ENCODE measurements at regions of chr4 and their contacts with region 1.

Region 1: GRCh38 chr4:105140684-105141490 is 5.8 kb upstream of the TET2 start:
- DNase-seq: no peak
- ATAC-seq: peak; percentile 59
- H3K4me3 ChIP-seq: no peak overlapping the region
- H3K27ac ChIP-seq: no peak overlapping the region
- H3K4me1 ChIP-seq: no peaks in the 10 kb centered on the region; the same call in none of the 2 replicates
- H3K27me3 ChIP-seq: no peaks in the 10 kb centered on the region
- CTCF ChIP-seq: peak; percentile 51 to 83 (median 60); a peak in 5 of 6 replicates
- EP300 ChIP-seq: no peak
- POLR2A ChIP-seq: no peak
- RAD21 ChIP-seq: peak; percentile 92

Region 2: DNA sequence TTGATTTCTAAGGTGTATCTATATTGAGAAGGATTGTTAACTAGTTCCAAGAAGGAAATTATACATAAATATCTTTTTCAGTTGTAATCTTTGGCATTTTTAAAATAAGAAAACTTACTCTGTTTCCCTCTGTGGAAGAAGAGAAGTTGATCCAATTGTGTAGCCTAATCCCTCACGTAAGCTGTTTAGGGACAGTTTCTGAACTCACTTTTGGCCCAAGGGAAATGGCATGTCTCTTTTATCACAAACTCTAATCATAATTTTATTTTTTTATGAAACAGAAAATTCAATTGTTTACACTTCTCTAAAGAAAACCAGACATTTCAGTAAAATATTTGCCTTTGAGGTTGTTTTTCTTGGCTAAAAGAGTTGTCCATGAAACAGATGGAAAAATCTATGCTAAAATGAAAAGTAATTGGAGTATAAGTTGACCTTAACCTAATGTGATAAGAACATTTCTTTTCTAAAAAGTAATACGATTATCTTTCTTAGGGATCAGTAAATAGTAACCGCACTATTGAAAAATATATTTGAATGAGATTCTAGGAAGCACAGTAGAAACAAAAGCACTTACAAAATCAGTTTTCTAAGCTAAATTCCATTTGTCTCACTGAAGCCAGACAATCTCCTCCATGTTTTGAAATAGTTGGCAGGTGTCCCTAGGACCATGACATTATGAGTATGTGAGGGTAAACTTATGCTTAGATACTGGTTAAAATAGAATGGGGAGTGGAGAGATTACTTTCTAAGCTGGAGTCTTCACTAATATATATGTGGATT is 14.5 kb before region 1 on chr4:
- CTCF ChIA-PET with region 1: interaction called, 13 read pairs
- POLR2A ChIA-PET with region 1: no interaction called
- RAD21 ChIA-PET with region 1: interaction called, 4 read pairs
- SMC1A ChIA-PET with region 1: interaction called, 3 read pairs
- in situ Hi-C with region 1: no loop called
- intact Hi-C with region 1: no loop called
- DNase-seq: no peak
- ATAC-seq: peak; percentile 17; the same call in 1 of the 3 replicates
- H3K4me3 ChIP-seq: no peak overlapping the region
- H3K27ac ChIP-seq: no peak overlapping the region
- H3K4me1 ChIP-seq: no peaks in the 10 kb centered on the region
- H3K27me3 ChIP-seq: no peaks in the 10 kb centered on the region
- CTCF ChIP-seq: no peak
- EP300 ChIP-seq: no peak
- POLR2A ChIP-seq: no peak
- RAD21 ChIP-seq: no peak

Region 3: DNA sequence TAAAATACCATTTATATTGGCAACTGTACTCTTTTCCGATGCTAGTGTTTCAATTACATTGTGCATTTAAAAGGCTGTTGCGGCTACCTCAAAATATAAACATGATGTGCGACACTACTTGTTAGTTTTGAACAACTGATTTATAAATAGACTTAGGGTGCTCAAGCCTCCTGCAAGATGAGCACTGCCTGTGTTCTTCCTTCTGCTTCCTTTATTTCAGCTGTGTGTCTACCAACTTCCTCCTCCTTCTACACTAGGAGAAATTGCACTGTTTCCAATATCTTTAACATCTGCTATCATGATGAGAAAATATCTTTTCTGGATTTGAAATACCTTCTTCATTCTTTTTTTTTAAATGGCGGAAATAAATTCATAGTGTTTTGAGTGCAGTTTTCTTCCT is 29.8 kb after region 1 on chr4:
- CTCF ChIA-PET with region 1: no interaction called
- POLR2A ChIA-PET with region 1: no interaction called
- RAD21 ChIA-PET with region 1: no interaction called
- SMC1A ChIA-PET with region 1: no interaction called
- in situ Hi-C with region 1: no loop called
- intact Hi-C with region 1: no loop called
- DNase-seq: no peak
- ATAC-seq: no peak
- H3K4me3 ChIP-seq: no peak overlapping the region
- H3K27ac ChIP-seq: no peak overlapping the region
- H3K4me1 ChIP-seq: no peaks in the 10 kb centered on the region
- H3K27me3 ChIP-seq: no peaks in the 10 kb centered on the region
- CTCF ChIP-seq: no peak
- EP300 ChIP-seq: no peak
- POLR2A ChIP-seq: no peak
- RAD21 ChIP-seq: no peak